CD8-positive, alpha-beta T cell (primary cell): ENCODE measurements at regions of chr6 and their contacts with region 1.

Region 1: GRCh38 chr6:163956571-163957407 is 542.3 kb downstream of the QKI start:
- DNase-seq: peak; percentile 8 to 69 (median 51)
- ATAC-seq: peak; percentile 34
- H3K4me3 ChIP-seq: no peak overlapping the region
- H3K4me3 Mint-ChIP-seq: no peak overlapping the region
- H3K27ac ChIP-seq: no peak overlapping the region
- H3K27ac Mint-ChIP-seq: no peak overlapping the region
- H3K4me1 ChIP-seq: peaks cover 3% of the 10 kb centered on the region
- H3K4me1 Mint-ChIP-seq: peaks cover 6% of the 10 kb centered on the region
- H3K27me3 ChIP-seq: no peaks in the 10 kb centered on the region
- H3K27me3 Mint-ChIP-seq: peaks cover 28% of the 10 kb centered on the region
- CTCF ChIP-seq: peak; percentile 67

Region 2: DNA sequence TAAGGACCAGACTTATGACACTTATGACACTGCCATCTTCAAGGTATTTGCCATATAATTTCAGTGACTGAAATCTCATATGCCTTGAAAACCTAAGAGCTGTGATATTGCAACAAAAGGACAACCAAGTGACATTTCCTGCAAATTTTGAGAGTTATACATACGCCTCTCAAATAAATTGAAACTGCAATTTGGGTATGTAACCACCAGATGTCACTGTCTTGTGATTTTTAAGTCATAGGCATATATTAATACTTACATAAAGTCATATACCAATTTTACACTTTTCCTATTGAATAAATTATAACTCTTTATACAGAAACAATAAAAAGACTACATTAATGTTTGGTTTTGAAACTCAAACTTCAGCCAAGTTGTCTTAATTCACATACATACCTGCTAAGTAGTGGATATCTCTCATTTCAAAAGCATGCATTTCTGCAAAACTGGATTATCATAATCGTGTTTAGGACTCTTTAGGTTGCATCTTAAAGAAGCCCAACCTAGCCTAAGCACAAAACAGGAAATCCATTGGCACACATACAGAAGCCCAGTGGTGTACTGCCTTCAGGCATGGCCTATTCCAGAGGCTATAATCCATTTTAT is 1048.8 kb before region 1 on chr6:
- CTCF ChIA-PET with region 1: no interaction called
- POLR2A ChIA-PET with region 1: no interaction called
- intact Hi-C with region 1: loop called in 1 of 2 experiments (anchors 10 kb)
- DNase-seq: peak in 2 of 9 experiments; percentile 19 to 29
- ATAC-seq: no peak
- H3K4me3 ChIP-seq: no peak overlapping the region
- H3K4me3 Mint-ChIP-seq: no peak overlapping the region
- H3K27ac ChIP-seq: no peak overlapping the region
- H3K27ac Mint-ChIP-seq: no peak overlapping the region
- H3K4me1 ChIP-seq: no peaks in the 10 kb centered on the region
- H3K4me1 Mint-ChIP-seq: no peaks in the 10 kb centered on the region
- H3K27me3 ChIP-seq: no peaks in the 10 kb centered on the region
- H3K27me3 Mint-ChIP-seq: no peaks in the 10 kb centered on the region
- CTCF ChIP-seq: no peak

Region 3: GRCh38 chr6:163170294-163170883 is 786.4 kb before region 1 on chr6:
- CTCF ChIA-PET with region 1: no interaction called
- POLR2A ChIA-PET with region 1: no interaction called
- intact Hi-C with region 1: loop called in 1 of 2 experiments (anchors 2 kb)
- DNase-seq: peak in 3 of 9 experiments; percentile 16 to 30 (median 19)
- ATAC-seq: peak; percentile 38
- H3K4me3 ChIP-seq: no peak overlapping the region
- H3K4me3 Mint-ChIP-seq: no peak overlapping the region
- H3K27ac ChIP-seq: no peak overlapping the region
- H3K27ac Mint-ChIP-seq: no peak overlapping the region
- H3K4me1 ChIP-seq: no peaks in the 10 kb centered on the region
- H3K4me1 Mint-ChIP-seq: no peaks in the 10 kb centered on the region
- H3K27me3 ChIP-seq: no peaks in the 10 kb centered on the region
- H3K27me3 Mint-ChIP-seq: no peaks in the 10 kb centered on the region
- CTCF ChIP-seq: peak; percentile 69

Region 4: GRCh38 chr6:163427498-163428254 is 529.1 kb before region 1 on chr6:
- CTCF ChIA-PET with region 1: interaction called, 3 read pairs
- POLR2A ChIA-PET with region 1: no interaction called
- intact Hi-C with region 1: loop called in 1 of 2 experiments (anchors 2 kb)
- DNase-seq: peak in 2 of 9 experiments; percentile 48 to 59
- ATAC-seq: no peak
- H3K4me3 ChIP-seq: no peak overlapping the region
- H3K4me3 Mint-ChIP-seq: no peak overlapping the region
- H3K27ac ChIP-seq: no peak overlapping the region
- H3K27ac Mint-ChIP-seq: no peak overlapping the region
- H3K4me1 ChIP-seq: no peaks in the 10 kb centered on the region
- H3K4me1 Mint-ChIP-seq: peaks cover 48% of the 10 kb centered on the region
- H3K27me3 ChIP-seq: no peaks in the 10 kb centered on the region
- H3K27me3 Mint-ChIP-seq: no peaks in the 10 kb centered on the region
- CTCF ChIP-seq: no peak

Region 5: DNA sequence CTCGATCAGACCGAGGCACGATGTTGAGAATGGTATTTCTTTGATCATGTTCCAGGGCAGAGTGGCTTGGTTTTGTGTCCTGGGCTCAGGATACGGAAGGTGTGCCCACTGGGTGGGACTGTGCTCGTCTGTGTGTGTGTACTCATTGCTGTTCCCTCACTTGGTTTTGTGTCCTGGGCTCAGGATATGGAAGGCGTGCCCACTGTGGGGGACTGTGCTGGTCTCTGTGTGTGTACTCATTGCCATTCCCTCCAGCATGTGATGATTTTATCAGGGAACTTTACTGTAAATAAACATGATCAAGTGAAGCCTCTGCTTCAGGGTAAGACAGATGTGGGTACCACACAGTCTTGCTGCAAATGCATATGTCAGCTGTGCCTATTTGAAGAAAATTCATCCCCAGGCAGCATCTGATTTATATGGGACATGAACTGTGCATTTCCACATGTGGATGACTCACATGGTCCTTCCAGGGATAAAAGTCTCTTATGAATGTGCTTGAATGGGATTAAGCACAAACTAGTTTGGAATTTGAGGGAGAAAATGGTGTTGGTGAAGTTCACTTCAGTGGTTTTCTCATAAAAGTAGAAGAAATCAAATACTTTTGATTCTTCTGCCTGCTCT is 267.9 kb before region 1 on chr6:
- CTCF ChIA-PET with region 1: no interaction called
- POLR2A ChIA-PET with region 1: no interaction called
- intact Hi-C with region 1: no loop called
- DNase-seq: no peak
- ATAC-seq: no peak
- H3K4me3 ChIP-seq: no peak overlapping the region
- H3K4me3 Mint-ChIP-seq: no peak overlapping the region
- H3K27ac ChIP-seq: no peak overlapping the region
- H3K27ac Mint-ChIP-seq: no peak overlapping the region
- H3K4me1 ChIP-seq: no peaks in the 10 kb centered on the region
- H3K4me1 Mint-ChIP-seq: no peaks in the 10 kb centered on the region
- H3K27me3 ChIP-seq: no peaks in the 10 kb centered on the region
- H3K27me3 Mint-ChIP-seq: peaks cover 20% of the 10 kb centered on the region
- CTCF ChIP-seq: no peak